ENCODE measurements at regions of chr10 and their contacts with region 1.

Region 1: DNA sequence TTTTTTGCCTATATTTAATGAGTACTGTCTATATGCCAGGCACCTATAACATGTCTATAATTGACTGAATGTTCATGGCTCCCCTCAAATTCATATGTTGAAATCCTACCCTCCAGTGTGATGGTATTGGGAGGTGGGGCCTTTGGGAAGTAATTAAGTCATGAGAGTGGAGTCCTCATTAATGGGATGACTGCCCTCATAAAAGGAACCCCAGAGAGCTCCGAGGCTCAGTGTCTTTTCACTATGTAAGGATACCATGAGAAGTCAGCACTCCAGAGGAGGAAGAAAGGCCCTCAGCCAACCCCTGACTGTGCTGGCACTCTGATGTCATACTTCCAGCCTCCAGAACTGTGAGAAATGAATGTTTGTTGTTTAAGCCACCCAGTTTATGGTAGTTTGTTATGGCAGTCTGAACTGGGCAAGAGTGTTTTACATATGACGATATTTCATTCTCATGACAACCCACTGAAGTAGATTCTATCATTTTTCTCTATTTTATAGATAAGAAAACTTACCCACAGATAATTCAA is 61.1 kb upstream of the PCGF5 start:
- DNase-seq: no peak
- ATAC-seq: no peak
- H3K4me3 ChIP-seq: no peak overlapping the region
- H3K27ac ChIP-seq: no peak overlapping the region
- H3K4me1 ChIP-seq: peaks cover 0 to 10% of the 10 kb centered on the region in 2 donors
- H3K27me3 ChIP-seq: peaks cover 0 to 22% of the 10 kb centered on the region in 2 donors
- CTCF ChIP-seq: no peak

Region 2: GRCh38 chr10:91043173-91043910 is 116.0 kb before region 1 on chr10:
- intact Hi-C with region 1: no loop called
- DNase-seq: peak in 1 of 4 donors; percentile 25
- ATAC-seq: peak; percentile 41
- H3K4me3 ChIP-seq: no peak overlapping the region
- H3K27ac ChIP-seq: no peak overlapping the region
- H3K4me1 ChIP-seq: no peaks in the 10 kb centered on the region
- H3K27me3 ChIP-seq: no peaks in the 10 kb centered on the region
- CTCF ChIP-seq: peak; percentile 16 to 25

Region 3: DNA sequence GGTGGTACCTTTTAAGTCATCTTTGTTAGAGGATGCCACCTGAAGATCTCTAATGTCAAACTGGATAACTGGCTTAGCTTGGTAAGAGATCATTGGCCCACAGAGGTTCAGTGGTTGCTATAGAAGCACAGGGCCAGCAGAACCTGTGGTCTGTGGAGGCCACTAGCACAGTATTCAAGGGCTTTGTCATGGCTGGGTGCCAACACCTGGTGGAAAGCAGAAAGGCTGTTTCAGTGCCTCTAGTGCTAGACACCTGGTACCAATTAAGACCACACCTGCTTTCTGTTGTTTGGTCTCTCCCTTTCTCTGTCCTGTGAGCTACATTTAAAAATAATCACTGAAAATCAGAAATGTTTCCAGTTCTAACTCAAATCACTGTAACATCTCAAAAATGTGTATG is 51.1 kb after region 1 on chr10:
- intact Hi-C with region 1: loop called in 1 of 2 experiments (anchors 10 kb)
- DNase-seq: peak in 2 of 4 donors; percentile 50 to 72
- ATAC-seq: peak; percentile 93
- H3K4me3 ChIP-seq: no peak overlapping the region
- H3K27ac ChIP-seq: no peak overlapping the region
- H3K4me1 ChIP-seq: no peaks in the 10 kb centered on the region
- H3K27me3 ChIP-seq: no peaks in the 10 kb centered on the region
- CTCF ChIP-seq: no peak

Measured in left lung (tissue), 14 donors.